ENCODE measurements at regions of chr14 and their contacts with region 1.

Region 1: GRCh38 chr14:50532502-50533240 is at the start of gene MAP4K5:
- DNase-seq: peak; percentile 81 to 87
- ATAC-seq: peak; percentile 95
- H3K4me3 ChIP-seq: peak within 1 kb of the TSS; percentile 83 to 88 (median 85)
- H3K27ac ChIP-seq: peak within 1 kb of the TSS; percentile 86 to 95 (median 94)
- H3K4me1 ChIP-seq: peaks cover 21 to 29% of the 10 kb centered on the region in 2 donors
- H3K27me3 ChIP-seq: no peaks in the 10 kb centered on the region
- CTCF ChIP-seq: peak; percentile 85 to 96 (median 93)
- POLR2A ChIP-seq: peak; percentile 82 to 87
- total RNA-seq, gene MAP4K5: 35.3 to 63.9 (median 47.1) TPM

Region 2: GRCh38 chr14:49852301-49853157 is 680.1 kb before region 1 on chr14 and contains the start of gene NEMF:
- in situ Hi-C with region 1: loop called in 2 of 4 experiments (anchors 25 kb)
- intact Hi-C with region 1: no loop called
- DNase-seq: peak; percentile 71 to 83
- ATAC-seq: peak; percentile 81
- H3K4me3 ChIP-seq: peak within 1 kb of the TSS; percentile 78 to 95 (median 86)
- H3K27ac ChIP-seq: peak within 1 kb of the TSS; percentile 92 to 98 (median 96)
- H3K4me1 ChIP-seq: peaks cover 37 to 39% of the 10 kb centered on the region in 2 donors
- H3K27me3 ChIP-seq: no peaks in the 10 kb centered on the region
- CTCF ChIP-seq: peak; percentile 76 to 92 (median 78)
- POLR2A ChIP-seq: peak; percentile 79 to 82
- total RNA-seq, gene NEMF: 56.5 to 71.1 (median 65.2) TPM

Region 3: GRCh38 chr14:50231475-50232275 is 301.0 kb before region 1 on chr14 and contains the start of gene SOS2:
- in situ Hi-C with region 1: no loop called
- intact Hi-C with region 1: loop called (anchors 2 kb)
- DNase-seq: peak; percentile 74 to 86
- ATAC-seq: peak; percentile 79 to 84
- H3K4me3 ChIP-seq: peak within 1 kb of the TSS; percentile 74 to 98 (median 86)
- H3K27ac ChIP-seq: peak within 1 kb of the TSS; percentile 91 to 99 (median 97)
- H3K4me1 ChIP-seq: peaks cover 51 to 53% of the 10 kb centered on the region in 2 donors
- H3K27me3 ChIP-seq: no peaks in the 10 kb centered on the region
- CTCF ChIP-seq: peak in 1 of 5 experiments; percentile 33
- POLR2A ChIP-seq: peak; percentile 91 to 95
- total RNA-seq, gene SOS2: 46.5 to 81.2 (median 52.3) TPM

Region 4: DNA sequence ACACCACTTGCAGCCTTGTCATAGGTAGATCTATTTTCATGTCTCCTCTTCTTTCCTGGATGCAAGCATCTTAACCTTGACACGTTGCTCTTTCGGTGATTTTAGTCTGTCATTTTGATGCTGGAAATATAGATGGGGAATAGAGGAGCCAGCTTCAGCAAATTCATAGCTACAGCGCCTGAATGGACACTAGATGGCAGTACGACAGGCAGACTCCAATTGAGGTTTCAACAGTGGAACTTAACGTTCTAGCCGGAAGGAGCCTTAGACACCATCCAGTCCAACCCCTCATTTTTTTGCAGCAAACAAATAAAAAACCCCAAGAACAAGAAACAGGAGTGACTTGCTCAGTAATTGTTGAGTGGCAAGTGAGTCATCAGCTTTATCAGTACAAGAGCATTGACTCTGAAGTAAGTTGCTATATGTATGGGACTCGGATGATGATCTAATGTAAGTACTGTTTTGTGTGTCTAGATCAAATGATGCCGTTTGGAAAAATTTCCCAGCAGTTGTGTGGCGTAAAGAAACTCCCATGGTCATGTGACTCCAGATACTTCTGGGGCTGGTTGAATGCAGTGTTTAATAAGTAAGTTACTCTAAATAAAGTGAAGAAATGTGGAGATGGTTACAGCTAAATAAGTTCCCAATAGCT is 211.5 kb before region 1 on chr14:
- in situ Hi-C with region 1: loop called in 3 of 4 experiments (anchors 5 to 10 kb)
- intact Hi-C with region 1: loop called (anchors 1 kb)
- DNase-seq: peak; percentile 44 to 51
- ATAC-seq: peak; percentile 96 to 99
- H3K4me3 ChIP-seq: peak overlapping the region; percentile 15 to 40 (median 28)
- H3K27ac ChIP-seq: peak overlapping the region; percentile 52 to 72 (median 63)
- H3K4me1 ChIP-seq: peaks cover 16 to 23% of the 10 kb centered on the region in 2 donors
- H3K27me3 ChIP-seq: no peaks in the 10 kb centered on the region
- CTCF ChIP-seq: peak; percentile 52 to 89 (median 77)
- POLR2A ChIP-seq: no peak

Region 5: DNA sequence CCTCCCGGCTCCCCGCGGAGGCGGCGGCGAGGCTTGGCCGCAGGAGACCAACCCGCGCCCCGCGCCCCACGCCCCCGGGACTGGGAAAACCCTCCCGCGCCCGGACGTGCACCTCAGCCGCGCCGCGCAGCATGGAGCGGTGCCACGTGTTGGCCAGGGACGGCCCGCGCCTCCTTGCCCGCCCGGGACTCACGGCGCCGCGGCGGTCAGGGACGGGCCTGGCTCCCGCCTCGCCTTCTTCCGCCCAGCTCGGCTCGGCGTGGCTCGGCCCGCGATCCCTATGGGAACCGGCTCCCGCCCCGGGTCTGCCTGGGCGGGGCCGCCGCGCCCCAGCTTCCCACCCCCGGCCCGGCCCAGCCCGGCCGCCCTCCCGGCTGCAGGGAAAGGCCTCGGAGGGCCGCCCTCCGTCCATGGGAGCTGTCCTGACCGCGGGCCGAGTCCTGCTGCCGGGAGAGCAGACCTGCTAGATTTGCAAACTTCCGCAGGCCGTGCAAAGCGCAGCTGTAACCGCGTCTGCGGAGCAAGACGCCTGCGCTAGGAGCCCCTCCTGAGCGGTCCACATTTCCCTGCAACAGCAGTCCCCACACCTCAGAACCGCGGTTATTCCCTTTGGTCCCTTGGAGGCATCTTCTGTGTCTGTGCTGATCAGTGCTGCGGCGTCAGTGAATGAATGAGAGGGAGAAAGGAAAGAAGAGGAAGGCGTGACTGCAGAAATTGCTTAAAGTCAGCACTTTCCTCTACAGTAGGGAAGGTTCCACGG is 135.9 kb before region 1 on chr14 and contains the start of gene CDKL1:
- in situ Hi-C with region 1: no loop called
- intact Hi-C with region 1: loop called (anchors 2 kb)
- DNase-seq: peak; percentile 9 to 27
- ATAC-seq: peak; percentile 74 to 75
- H3K4me3 ChIP-seq: peak within 1 kb of the TSS; percentile 59 to 95 (median 67)
- H3K27ac ChIP-seq: peak within 1 kb of the TSS; percentile 66 to 70 (median 68)
- H3K4me1 ChIP-seq: peaks cover 10 to 13% of the 10 kb centered on the region in 2 donors
- H3K27me3 ChIP-seq: no peaks in the 10 kb centered on the region
- CTCF ChIP-seq: no peak
- POLR2A ChIP-seq: peak in 1 of 2 donors; percentile 13
- total RNA-seq, gene CDKL1: 0.59 to 2.0 (median 1.4) TPM

Region 6: DNA sequence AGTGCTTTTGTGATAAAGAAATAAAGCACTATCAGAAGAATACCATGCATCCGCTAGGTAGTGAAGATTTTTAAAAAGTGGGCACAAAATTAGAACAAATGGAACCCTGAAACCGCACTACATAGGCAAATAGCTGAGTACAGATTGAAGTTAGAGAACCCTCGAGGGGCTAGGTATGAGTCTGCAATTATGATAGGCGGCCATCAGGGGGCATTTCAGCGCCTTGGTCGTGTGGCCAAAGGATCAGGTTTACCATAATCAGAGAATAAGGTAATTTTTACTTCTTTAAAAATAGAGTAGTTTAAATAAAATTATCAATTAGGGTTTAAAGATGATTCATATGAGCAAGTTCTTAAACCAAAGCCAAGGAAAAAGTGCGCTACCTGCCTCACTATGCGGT is 837.1 kb after region 1 on chr14:
- in situ Hi-C with region 1: no loop called
- intact Hi-C with region 1: no loop called
- DNase-seq: no peak
- ATAC-seq: no peak
- H3K4me3 ChIP-seq: no peak overlapping the region
- H3K27ac ChIP-seq: no peak overlapping the region
- H3K4me1 ChIP-seq: peaks cover 0 to 8% of the 10 kb centered on the region in 2 donors
- H3K27me3 ChIP-seq: no peaks in the 10 kb centered on the region
- CTCF ChIP-seq: peak in 1 of 5 experiments; percentile 13
- POLR2A ChIP-seq: no peak